Heart right ventricle (tissue), 16 donors: ENCODE measurements at regions of chr16 and their contacts with region 1.

Region 1: GRCh38 chr16:6193718-6194117 is 1096.1 kb upstream of the EEF2KMT start:
- DNase-seq: no peak
- ATAC-seq: no peak
- H3K4me3 ChIP-seq: no peak overlapping the region
- H3K27ac ChIP-seq: no peak overlapping the region
- H3K4me1 ChIP-seq: no peaks in the 10 kb centered on the region
- H3K27me3 ChIP-seq: no peaks in the 10 kb centered on the region
- CTCF ChIP-seq: no peak

Region 2: GRCh38 chr16:6032438-6032837 is 161.3 kb before region 1 on chr16:
- intact Hi-C with region 1: no loop called
- DNase-seq: no peak
- ATAC-seq: no peak
- H3K4me3 ChIP-seq: no peak overlapping the region
- H3K27ac ChIP-seq: no peak overlapping the region
- H3K4me1 ChIP-seq: no peaks in the 10 kb centered on the region
- H3K27me3 ChIP-seq: peaks cover 0 to 6% (median 0%) of the 10 kb centered on the region in 7 donors
- CTCF ChIP-seq: no peak

Region 3: DNA sequence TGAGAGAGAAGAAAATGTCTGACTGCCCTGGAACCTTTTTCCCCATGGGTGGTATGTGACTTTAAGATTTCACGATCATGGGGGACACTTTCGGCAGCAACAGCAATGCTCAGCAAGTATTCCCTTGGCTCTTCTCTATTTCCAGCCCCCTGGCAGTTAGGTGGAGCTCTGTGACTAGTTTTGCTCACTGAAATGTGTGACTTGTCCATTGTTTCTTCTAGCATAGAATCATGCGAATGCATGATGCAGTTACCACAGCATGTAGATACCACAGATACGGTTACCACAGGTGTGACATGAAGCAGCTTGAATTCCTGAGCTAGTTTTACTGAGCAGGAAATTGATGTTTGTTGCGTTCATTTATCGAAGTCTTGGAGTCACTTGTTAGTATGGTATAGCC is 61.6 kb before region 1 on chr16:
- intact Hi-C with region 1: loop called in 1 of 10 experiments (anchors 10 kb)
- DNase-seq: no peak
- ATAC-seq: no peak
- H3K4me3 ChIP-seq: no peak overlapping the region
- H3K27ac ChIP-seq: no peak overlapping the region
- H3K4me1 ChIP-seq: no peaks in the 10 kb centered on the region
- H3K27me3 ChIP-seq: no peaks in the 10 kb centered on the region
- CTCF ChIP-seq: no peak

Region 4: GRCh38 chr16:6206080-6206479 is 12.4 kb after region 1 on chr16:
- intact Hi-C with region 1: loop called in 1 of 10 experiments (anchors 1 kb)
- DNase-seq: no peak
- ATAC-seq: no peak
- H3K4me3 ChIP-seq: no peak overlapping the region
- H3K27ac ChIP-seq: no peak overlapping the region
- H3K4me1 ChIP-seq: no peaks in the 10 kb centered on the region
- H3K27me3 ChIP-seq: no peaks in the 10 kb centered on the region
- CTCF ChIP-seq: no peak